T-cell (primary cell): ENCODE measurements at regions of chr22 and their contacts with region 1.

Region 1: DNA sequence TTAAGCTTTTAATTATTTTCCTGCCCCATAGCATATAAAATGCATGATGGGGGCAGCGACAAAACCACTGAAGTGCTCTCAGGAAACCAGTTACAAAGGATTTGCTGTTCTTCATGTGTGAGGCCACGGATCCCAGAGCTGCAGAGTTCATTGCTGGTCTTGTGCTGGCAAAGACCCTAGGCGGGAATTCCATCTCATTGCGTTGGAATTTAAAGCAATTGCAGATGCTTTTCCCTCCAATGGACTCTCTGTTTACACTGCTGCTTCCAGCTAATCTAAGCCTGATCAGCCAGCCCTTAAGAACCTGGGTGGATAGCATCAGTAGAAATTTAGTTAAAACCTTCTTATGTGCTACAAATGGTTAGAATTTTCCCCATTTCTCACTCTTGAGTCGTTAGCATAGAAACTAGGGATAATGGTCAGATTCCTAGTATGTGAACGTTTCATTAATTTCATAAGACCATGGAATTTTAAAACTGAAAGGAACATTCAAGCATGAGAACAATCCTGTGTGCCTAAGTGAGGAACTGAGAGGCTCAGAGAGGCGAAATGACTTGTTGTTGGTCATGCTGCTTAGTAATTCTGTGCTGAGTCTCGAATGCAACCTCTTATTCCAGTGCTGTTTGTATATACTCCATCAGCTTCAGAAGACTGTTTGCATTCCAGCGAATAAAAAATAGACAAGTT is 36.1 kb upstream of the ADSL start:
- DNase-seq: no peak
- ATAC-seq: no peak
- H3K4me3 ChIP-seq: no peak overlapping the region
- H3K4me3 Mint-ChIP-seq: no peak overlapping the region
- H3K27ac ChIP-seq: no peak overlapping the region
- H3K27ac Mint-ChIP-seq: peak overlapping the region; percentile 75 to 89
- H3K4me1 ChIP-seq: peaks cover 15 to 21% of the 10 kb centered on the region in 2 experiments
- H3K4me1 Mint-ChIP-seq: peaks cover 37 to 42% (median 39%) of the 10 kb centered on the region in 3 donors
- H3K27me3 ChIP-seq: no peaks in the 10 kb centered on the region
- H3K27me3 Mint-ChIP-seq: no peaks in the 10 kb centered on the region

Region 2: DNA sequence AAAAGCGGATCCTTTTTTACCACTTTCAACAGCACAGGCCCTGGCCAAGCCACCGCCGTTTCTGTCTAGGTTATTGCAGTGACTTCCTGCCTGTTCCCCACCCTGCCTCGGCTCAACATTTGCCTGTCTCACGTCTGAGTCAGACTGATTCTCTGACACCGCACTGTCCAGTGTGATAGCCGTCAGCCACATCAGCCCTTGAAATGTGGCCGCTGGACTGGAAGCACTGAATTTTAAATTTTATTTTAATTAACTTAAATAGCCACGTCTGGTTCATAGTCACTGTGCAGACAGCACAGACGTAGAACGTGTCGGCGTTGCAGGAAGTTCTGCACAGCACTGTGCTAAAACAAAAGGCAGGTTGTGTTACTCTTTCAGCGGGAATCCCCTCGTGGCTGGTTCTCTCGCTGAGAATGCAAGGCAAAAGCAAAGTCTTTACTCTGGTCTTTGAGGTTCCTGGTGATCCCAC is 20.2 kb before region 1 on chr22:
- CTCF ChIA-PET with region 1: interaction called in 1 of 2 experiments, 7 read pairs
- POLR2A ChIA-PET with region 1: interaction called in 1 of 2 experiments, 14 read pairs
- DNase-seq: peak; percentile 54 to 89 (median 71)
- ATAC-seq: peak; percentile 87 to 90 (median 89)
- H3K4me3 ChIP-seq: peak overlapping the region in 1 of 2 donors; percentile 32
- H3K4me3 Mint-ChIP-seq: peak overlapping the region; percentile 25 to 63 (median 58)
- H3K27ac ChIP-seq: peak overlapping the region; percentile 93
- H3K27ac Mint-ChIP-seq: peak overlapping the region; percentile 97
- H3K4me1 ChIP-seq: peaks cover 31 to 43% of the 10 kb centered on the region in 2 experiments
- H3K4me1 Mint-ChIP-seq: peaks cover 67 to 76% (median 68%) of the 10 kb centered on the region in 3 donors
- H3K27me3 ChIP-seq: no peaks in the 10 kb centered on the region
- H3K27me3 Mint-ChIP-seq: no peaks in the 10 kb centered on the region